Activated CD8-positive, alpha-beta T cell treated with anti-CD3 and anti-CD28 coated beads for 36 hours (primary cell): ENCODE measurements at regions of chr1 and their contacts with region 1.

Region 1: DNA sequence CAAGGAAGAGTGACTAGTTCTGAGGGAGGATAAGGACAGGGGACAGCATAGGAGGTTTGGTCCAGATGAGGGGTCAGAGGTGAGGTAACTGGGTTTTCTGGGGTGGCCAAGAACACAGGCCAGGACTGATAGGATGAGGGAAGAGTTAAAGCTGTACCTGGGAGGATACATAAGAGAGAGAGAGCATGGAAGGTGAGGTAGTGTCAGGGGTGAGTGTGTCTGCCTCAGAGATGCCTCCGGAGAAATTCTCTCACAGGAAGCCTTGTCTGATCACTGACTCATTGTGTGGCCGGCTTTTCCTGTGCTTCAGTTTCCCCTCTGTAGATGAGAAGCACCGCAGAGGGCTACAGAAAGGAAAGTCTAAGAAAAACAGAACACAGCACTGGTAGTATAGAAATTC is 40.2 kb downstream of the FASLG start:
- DNase-seq: peak; percentile 87
- ATAC-seq: peak; percentile 80
- H3K4me3 Mint-ChIP-seq: peak overlapping the region; percentile 50
- H3K27ac Mint-ChIP-seq: peak overlapping the region; percentile 95
- H3K4me1 Mint-ChIP-seq: peaks cover 54% of the 10 kb centered on the region
- H3K27me3 Mint-ChIP-seq: no peaks in the 10 kb centered on the region
- CTCF ChIP-seq: no peak

Region 2: GRCh38 chr1:172638885-172639831 is 60.0 kb before region 1 on chr1:
- CTCF ChIA-PET with region 1: interaction called, 3 read pairs
- POLR2A ChIA-PET with region 1: interaction called, 9 read pairs
- intact Hi-C with region 1: loop called (anchors 2 kb)
- DNase-seq: peak; percentile 94
- ATAC-seq: peak; percentile 75
- H3K4me3 Mint-ChIP-seq: peak overlapping the region; percentile 49
- H3K27ac Mint-ChIP-seq: peak overlapping the region; percentile 98
- H3K4me1 Mint-ChIP-seq: peaks cover 72% of the 10 kb centered on the region
- H3K27me3 Mint-ChIP-seq: no peaks in the 10 kb centered on the region
- CTCF ChIP-seq: no peak

Region 3: DNA sequence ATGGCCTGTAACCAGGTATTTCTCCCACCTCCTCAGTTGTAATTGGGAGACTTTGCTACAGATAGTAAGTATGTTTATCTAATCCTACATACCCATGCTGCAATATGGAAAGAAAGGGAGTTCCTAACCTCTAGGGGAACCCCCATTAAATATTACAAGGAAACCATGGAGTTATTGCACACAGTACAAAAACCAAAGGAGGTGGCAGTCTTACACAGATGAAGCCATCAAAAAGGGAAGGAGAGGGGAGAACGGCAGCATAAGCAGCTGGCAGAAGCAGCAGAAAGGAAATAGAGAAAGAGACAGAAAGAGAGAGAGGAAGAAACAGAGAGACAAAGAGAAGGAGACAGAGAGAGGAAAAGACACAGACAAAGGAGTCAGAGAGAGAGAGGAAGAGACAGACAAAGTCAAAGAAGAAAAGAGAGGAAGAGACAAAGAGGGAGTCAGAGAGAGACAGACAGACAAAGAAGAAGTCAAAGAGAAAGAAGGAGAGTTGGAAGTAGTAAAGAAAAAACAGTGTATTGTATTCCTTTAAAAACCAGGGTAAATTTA is 102.7 kb after region 1 on chr1:
- CTCF ChIA-PET with region 1: no interaction called
- POLR2A ChIA-PET with region 1: no interaction called
- intact Hi-C with region 1: no loop called
- DNase-seq: no peak
- ATAC-seq: no peak
- H3K4me3 Mint-ChIP-seq: no peak overlapping the region
- H3K27ac Mint-ChIP-seq: no peak overlapping the region
- H3K4me1 Mint-ChIP-seq: no peaks in the 10 kb centered on the region
- H3K27me3 Mint-ChIP-seq: no peaks in the 10 kb centered on the region
- CTCF ChIP-seq: no peak